ENCODE measurements at regions of chr11 and their contacts with region 1.

Region 1: DNA sequence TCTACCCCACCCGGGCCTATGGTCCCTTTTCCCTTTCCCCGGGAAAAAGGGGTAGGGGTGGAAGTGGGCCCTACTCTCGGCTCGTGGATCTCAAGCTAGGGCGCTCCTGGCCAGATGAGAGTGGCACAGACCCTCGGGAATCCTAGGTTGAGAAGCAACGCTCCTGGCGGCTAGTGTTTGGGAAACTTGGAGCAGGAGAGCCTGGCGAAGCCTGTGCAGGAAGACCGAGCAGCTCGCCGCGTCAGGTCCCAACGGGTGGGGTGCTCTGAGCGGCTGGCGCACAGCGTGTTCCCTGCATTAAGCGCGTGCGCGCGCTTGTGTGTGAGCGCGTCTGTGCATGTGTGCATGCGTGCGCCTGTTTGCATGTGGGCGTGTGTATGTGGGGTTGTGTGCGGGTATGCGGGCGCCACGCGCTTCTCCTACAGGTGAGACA is 7.1 kb upstream of the FLI1 start:
- DNase-seq: no peak
- H3K4me3 ChIP-seq: peak overlapping the region; percentile 38
- CTCF ChIP-seq: no peak

Region 2: GRCh38 chr11:128630367-128631230 is 56.2 kb before region 1 on chr11:
- in situ Hi-C with region 1: no loop called
- DNase-seq: peak; percentile 76
- H3K4me3 ChIP-seq: no peak overlapping the region
- CTCF ChIP-seq: peak; percentile 81

Region 3: GRCh38 chr11:128725630-128726319 is 39.0 kb after region 1 on chr11:
- in situ Hi-C with region 1: loop called (anchors 5 kb)
- DNase-seq: no peak
- H3K4me3 ChIP-seq: no peak overlapping the region
- CTCF ChIP-seq: no peak

Region 4: GRCh38 chr11:128735935-128736605 is 49.3 kb after region 1 on chr11:
- in situ Hi-C with region 1: no loop called
- DNase-seq: no peak
- H3K4me3 ChIP-seq: no peak overlapping the region
- CTCF ChIP-seq: no peak

Region 5: GRCh38 chr11:128790196-128790595 is 103.4 kb after region 1 on chr11:
- in situ Hi-C with region 1: loop called (anchors 5 kb)
- DNase-seq: peak; percentile 23
- H3K4me3 ChIP-seq: no peak overlapping the region
- CTCF ChIP-seq: no peak

Region 6: GRCh38 chr11:128886406-128887124 is 199.8 kb after region 1 on chr11:
- in situ Hi-C with region 1: no loop called
- DNase-seq: no peak
- H3K4me3 ChIP-seq: no peak overlapping the region
- CTCF ChIP-seq: peak; percentile 35

Measured in astrocyte of the cerebellum (primary cell).